Posterior vena cava (tissue), 2 donors: ENCODE measurements at regions of chr6 and their contacts with region 1.

Region 1: GRCh38 chr6:36094753-36095496 is 35.4 kb upstream of the MAPK13 start:
- DNase-seq: peak; percentile 94

Region 2: GRCh38 chr6:36027501-36028087 is 67.3 kb before region 1 on chr6 and contains the start of gene MAPK14:
- intact Hi-C with region 1: loop called (anchors 1 to 2 kb)
- DNase-seq: peak; percentile 100
- total RNA-seq, gene MAPK14: 43.5 to 44.3 TPM